Sciatic nerve (tissue), 2 donors: ENCODE measurements at regions of chrX and their contacts with region 1.

Region 1: GRCh38 chrX:24476576-24476975 is 11.5 kb downstream of the PDK3 start:
- DNase-seq: no peak
- ATAC-seq: no peak

Region 2: GRCh38 chrX:24494647-24495075 is 18.1 kb after region 1 on chrX:
- intact Hi-C with region 1: loop called (anchors 1 kb)
- DNase-seq: no peak
- ATAC-seq: peak; percentile 59

Region 3: GRCh38 chrX:24561121-24561520 is 84.5 kb after region 1 on chrX:
- intact Hi-C with region 1: no loop called
- DNase-seq: no peak
- ATAC-seq: no peak